ENCODE measurements at regions of chr21 and their contacts with region 1.

Region 1: DNA sequence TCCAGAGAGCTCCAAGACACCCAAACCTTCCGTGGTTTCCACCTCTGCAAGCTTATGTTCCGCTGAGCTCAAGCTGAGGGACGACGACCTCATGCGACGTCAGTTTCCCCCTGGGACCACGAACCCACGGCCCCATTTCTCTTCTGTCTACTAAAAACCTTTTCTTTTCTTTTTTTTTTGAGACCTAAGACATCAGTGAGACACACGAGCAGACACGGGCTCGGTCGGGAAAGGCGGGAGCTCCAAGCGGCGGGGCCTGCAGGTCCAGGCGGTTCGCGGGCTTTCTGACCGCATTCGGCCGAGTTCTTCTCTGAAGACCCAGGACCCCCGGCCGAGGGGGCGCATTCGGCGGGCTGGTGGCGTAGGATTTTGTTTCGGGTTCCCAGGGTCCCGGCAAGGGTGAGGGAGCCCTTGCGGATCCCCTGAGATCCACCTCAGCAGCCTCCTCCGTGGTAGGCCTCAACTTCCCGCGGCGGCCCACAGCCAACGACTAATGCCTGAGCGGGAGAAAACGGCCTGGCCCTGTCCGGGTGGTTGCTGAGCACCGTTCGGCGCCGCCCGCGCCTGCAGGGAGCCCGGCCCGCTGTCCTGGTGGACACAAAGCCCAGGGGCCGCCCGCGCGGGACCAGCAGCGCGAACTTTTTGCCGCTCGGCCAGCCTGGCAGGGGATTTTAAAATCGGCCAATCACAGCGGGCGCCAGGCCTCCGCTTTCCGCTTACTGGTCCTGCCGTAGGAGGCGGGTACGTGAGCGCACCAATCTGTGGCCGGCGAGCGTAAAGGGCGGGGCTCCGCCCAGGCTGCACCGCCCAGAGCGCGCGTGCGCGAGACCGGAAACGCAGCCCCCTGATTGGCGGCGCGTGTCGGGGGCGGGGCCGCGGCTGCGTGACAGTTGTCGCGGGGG is at the start of gene C21orf58:
- DNase-seq: peak; percentile 98
- ATAC-seq: peak; percentile 82
- H3K4me3 Mint-ChIP-seq: peak within 1 kb of the TSS; percentile 94
- H3K27ac Mint-ChIP-seq: peak within 1 kb of the TSS; percentile 94
- H3K4me1 Mint-ChIP-seq: peaks cover 29% of the 10 kb centered on the region
- H3K27me3 Mint-ChIP-seq: no peaks in the 10 kb centered on the region
- CTCF ChIP-seq: no peak
- total RNA-seq, gene C21orf58: 4.7 TPM in 2 replicates

Region 2: DNA sequence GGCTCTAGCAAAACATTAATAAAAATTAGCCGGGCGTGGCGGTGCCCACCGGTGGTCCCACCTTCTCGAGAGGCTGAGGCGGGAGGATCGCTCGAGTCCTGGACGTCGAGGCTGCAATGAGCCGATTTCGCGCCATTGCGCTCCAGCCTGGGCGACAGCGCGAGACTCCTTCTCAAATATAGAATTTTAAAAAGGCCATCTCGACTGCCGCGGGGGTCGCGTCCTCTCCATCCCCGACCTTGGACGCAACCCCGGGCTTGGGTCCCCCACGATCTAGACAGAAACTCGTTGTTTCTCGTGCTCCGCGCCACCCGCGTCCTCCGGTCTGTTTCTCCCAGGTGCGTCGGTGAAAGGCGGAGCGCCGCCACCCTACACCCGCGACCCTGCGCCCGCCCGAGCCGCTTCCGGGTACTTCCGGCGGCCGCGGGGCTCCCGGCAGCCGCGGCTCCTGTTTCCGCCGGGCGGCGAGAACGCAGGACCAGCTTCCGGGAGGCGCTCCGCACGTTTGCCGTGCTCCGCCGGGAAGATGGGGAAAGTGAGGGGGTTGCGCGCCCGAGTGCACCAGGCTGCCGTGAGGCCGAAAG is 1383.9 kb before region 1 on chr21 and contains the start of gene SLX9:
- CTCF ChIA-PET with region 1: no interaction called
- POLR2A ChIA-PET with region 1: no interaction called
- intact Hi-C with region 1: loop called (anchors 5 kb)
- DNase-seq: peak; percentile 80
- ATAC-seq: peak; percentile 92
- H3K4me3 Mint-ChIP-seq: peak within 1 kb of the TSS; percentile 88
- H3K27ac Mint-ChIP-seq: peak within 1 kb of the TSS; percentile 84
- H3K4me1 Mint-ChIP-seq: peaks cover 42% of the 10 kb centered on the region
- H3K27me3 Mint-ChIP-seq: no peaks in the 10 kb centered on the region
- CTCF ChIP-seq: no peak
- total RNA-seq, gene SLX9: 26.0 and 34.7 TPM in 2 replicates

Region 3: DNA sequence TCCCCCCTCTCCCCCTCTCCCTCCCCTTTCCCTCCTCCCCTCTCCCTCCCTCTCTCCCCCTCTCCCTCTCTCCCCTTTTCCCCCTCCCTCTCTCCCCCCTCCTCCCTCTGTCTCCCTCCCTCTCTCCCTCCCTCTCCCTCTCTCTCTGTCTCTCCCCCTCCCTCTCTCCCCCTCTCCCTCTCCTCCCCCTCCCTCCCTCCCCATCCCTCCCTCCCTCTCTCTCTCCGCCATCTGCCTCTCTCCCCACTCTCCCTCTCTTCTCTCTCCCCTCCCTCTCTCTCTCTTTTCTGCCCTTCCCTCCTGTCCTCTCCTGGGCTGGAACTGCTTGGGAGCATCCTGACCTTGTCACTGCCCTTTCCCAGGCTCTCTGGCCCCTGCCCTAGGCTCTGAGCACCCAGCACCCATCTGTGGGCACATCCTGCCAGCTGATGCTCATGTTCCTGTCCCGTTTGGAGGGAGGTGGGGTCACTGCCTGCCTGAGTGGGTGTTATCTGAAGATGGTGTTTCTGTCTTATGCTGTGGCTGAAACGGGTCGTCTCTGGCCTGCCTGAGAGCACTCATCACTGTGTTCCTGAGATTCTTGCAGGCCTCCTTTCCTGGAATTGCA is 178.9 kb before region 1 on chr21:
- CTCF ChIA-PET with region 1: interaction called, 11 read pairs
- POLR2A ChIA-PET with region 1: no interaction called
- intact Hi-C with region 1: loop called (anchors 1 kb)
- DNase-seq: no peak
- ATAC-seq: no peak
- H3K4me3 Mint-ChIP-seq: peak overlapping the region; percentile 15
- H3K27ac Mint-ChIP-seq: no peak overlapping the region
- H3K4me1 Mint-ChIP-seq: peaks cover 5% of the 10 kb centered on the region
- H3K27me3 Mint-ChIP-seq: no peaks in the 10 kb centered on the region
- CTCF ChIP-seq: no peak

Region 4: GRCh38 chr21:46228345-46229051 is 95.0 kb before region 1 on chr21 and contains the start of gene LSS:
- CTCF ChIA-PET with region 1: no interaction called
- POLR2A ChIA-PET with region 1: interaction called, 5 read pairs
- intact Hi-C with region 1: loop called (anchors 1 kb)
- DNase-seq: peak; percentile 96
- ATAC-seq: peak; percentile 93
- H3K4me3 Mint-ChIP-seq: peak within 1 kb of the TSS; percentile 99
- H3K27ac Mint-ChIP-seq: peak within 1 kb of the TSS; percentile 97
- H3K4me1 Mint-ChIP-seq: peaks cover 39% of the 10 kb centered on the region
- H3K27me3 Mint-ChIP-seq: no peaks in the 10 kb centered on the region
- CTCF ChIP-seq: no peak
- total RNA-seq, gene LSS: 76.3 and 99.0 TPM in 2 replicates

Region 5: GRCh38 chr21:46368533-46369285 is 45.2 kb after region 1 on chr21:
- CTCF ChIA-PET with region 1: no interaction called
- POLR2A ChIA-PET with region 1: no interaction called
- intact Hi-C with region 1: loop called (anchors 5 kb)
- DNase-seq: no peak
- ATAC-seq: peak; percentile 79
- H3K4me3 Mint-ChIP-seq: peak overlapping the region; percentile 67
- H3K27ac Mint-ChIP-seq: peak overlapping the region; percentile 83
- H3K4me1 Mint-ChIP-seq: peaks cover 29% of the 10 kb centered on the region
- H3K27me3 Mint-ChIP-seq: no peaks in the 10 kb centered on the region
- CTCF ChIP-seq: no peak